ENCODE measurements at regions of chr3 and their contacts with region 1.

Region 1: GRCh38 chr3:135918580-135918962 is 47.0 kb upstream of the PPP2R3A start:
- DNase-seq: no peak
- H3K4me3 ChIP-seq: no peak overlapping the region
- H3K27ac ChIP-seq: no peak overlapping the region
- H3K27me3 ChIP-seq: no peaks in the 10 kb centered on the region
- CTCF ChIP-seq: peak; percentile 62

Region 2: DNA sequence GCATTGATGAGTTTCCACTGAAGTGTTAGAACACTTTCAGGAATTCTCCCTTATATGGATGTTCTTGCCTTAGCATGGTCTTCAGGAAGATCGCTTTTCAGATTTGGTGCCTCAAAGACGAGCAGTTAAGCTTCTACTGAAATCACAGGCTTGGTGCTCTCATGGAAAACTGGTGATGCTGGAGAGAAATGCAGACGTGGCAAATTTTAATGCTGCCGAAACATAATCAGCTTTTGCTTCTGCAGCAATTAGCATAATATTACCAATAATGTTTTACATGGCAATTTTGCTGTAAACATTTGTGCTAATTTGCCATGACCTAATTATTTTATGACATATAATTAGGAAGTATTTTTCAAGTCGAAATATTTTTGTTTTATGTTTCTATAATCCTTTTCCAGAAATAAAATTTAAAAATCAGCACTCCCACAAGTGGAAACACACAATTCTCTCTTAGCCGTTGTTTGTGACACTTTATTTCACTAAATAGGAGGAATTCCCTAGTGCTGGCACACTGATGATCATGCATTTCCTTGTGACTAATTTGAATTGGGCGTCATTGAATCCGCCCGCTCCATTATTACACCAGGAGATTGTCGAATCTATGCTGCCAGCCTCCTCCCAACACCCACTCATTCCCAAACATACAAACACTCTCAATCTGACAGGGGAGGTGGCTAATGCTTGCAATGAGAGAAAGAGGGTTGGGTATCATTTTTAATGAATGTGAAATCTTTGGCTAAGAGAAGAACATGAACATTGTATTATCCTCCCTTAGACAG is 459.8 kb before region 1 on chr3:
- CTCF ChIA-PET with region 1: no interaction called
- POLR2A ChIA-PET with region 1: no interaction called
- DNase-seq: no peak
- H3K4me3 ChIP-seq: no peak overlapping the region
- H3K27ac ChIP-seq: no peak overlapping the region
- H3K27me3 ChIP-seq: no peaks in the 10 kb centered on the region
- CTCF ChIP-seq: no peak

Region 3: DNA sequence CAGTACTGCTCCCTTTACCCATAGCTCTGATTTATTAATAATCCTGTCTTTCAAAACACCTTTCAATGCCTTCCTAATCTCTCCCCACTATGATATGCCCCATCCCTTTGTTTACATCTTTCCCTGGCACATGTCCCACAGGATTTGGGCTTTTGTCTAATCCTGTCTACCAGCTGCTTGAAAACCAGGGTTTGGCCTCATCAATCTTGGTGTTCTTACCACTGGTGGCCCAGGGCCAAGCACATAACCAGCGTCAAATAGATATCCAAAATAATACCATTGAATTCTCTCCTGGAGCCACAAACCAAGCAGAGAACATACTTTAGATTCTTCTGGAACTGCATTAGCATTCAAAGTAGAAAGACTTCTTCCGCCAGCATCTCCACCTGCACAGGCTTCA is 57.8 kb before region 1 on chr3:
- CTCF ChIA-PET with region 1: no interaction called
- POLR2A ChIA-PET with region 1: no interaction called
- DNase-seq: no peak
- H3K4me3 ChIP-seq: no peak overlapping the region
- H3K27ac ChIP-seq: no peak overlapping the region
- H3K27me3 ChIP-seq: no peaks in the 10 kb centered on the region
- CTCF ChIP-seq: no peak

Region 4: DNA sequence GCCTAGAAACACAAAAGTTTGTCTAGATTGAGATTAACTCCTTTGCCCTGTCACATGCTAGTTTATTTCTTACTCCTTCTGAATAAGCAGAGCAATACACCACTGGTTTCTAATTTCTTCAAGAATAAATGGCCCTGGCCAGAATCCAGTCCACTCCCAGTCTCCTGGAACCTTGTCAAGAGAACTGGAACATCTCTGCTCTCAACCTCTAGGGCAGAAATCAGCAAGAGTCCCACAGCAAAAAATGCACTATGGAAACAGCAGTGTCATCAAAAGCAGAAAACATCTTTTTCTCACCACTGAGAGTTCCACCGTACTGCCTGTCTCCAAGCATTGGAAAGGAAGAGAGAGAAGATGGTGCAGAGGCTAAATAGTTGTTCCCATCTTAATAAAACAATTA is 11.1 kb after region 1 on chr3:
- CTCF ChIA-PET with region 1: interaction called, 15 read pairs
- POLR2A ChIA-PET with region 1: no interaction called
- DNase-seq: no peak
- H3K4me3 ChIP-seq: no peak overlapping the region
- H3K27ac ChIP-seq: no peak overlapping the region
- H3K27me3 ChIP-seq: no peaks in the 10 kb centered on the region
- CTCF ChIP-seq: no peak

Region 5: GRCh38 chr3:135965506-135966270 is 47.1 kb after region 1 on chr3 and contains the start of gene PPP2R3A:
- CTCF ChIA-PET with region 1: interaction called, 12 read pairs
- POLR2A ChIA-PET with region 1: no interaction called
- DNase-seq: peak; percentile 55
- H3K4me3 ChIP-seq: peak within 1 kb of the TSS; percentile 75
- H3K27ac ChIP-seq: peak within 1 kb of the TSS; percentile 87
- H3K27me3 ChIP-seq: no peaks in the 10 kb centered on the region
- CTCF ChIP-seq: no peak
- polyA plus RNA-seq, gene PPP2R3A: 19.8 and 26.6 TPM in 2 replicates